Naive thymus-derived CD4-positive, alpha-beta T cell (primary cell): ENCODE measurements at regions of chr14 and their contacts with region 1.

Region 1: DNA sequence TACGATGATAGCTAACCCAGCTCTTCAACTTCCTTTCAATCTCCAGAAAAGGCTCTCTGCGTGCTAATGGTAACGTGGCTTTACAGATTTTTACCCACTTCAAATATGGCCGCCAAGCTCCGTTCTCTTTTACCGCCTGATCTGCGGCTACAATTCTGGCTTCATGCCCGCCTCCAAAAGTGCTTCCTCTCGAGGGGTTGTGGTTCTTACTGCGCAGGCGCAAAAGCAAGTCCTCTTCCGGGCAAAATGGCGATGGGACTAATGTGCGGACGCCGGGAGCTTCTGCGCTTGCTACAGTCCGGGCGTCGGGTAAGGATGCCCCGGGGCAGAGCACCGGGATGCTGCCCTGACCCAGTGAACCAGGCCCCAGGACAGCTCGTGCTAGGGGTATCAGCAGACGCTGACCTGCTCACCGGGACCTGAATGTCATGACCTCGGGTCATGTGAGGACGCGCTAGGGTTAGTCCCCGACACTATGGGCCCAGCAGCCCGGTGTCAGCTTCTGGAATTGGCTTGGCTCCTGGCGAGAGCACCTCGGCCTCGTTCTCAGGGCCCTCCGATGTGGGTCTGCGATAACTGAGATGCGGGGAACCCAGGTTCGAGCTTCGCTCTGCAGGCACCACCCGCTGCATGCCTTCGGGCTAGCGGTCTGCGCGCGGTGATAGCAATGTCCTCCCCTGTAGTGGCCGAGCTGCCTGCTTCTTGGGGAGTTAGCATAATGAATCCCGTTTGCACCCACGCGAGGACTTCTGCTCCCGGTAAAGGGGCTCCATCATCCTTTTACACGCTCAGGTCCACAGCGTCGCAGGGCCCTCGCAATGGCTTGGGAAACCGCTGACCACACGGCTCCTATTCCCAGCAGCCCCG is at the start of gene OXA1L:
- DNase-seq: peak; percentile 86 to 99 (median 96)
- ATAC-seq: peak; percentile 96
- H3K4me3 ChIP-seq: peak within 1 kb of the TSS; percentile 93
- H3K4me3 Mint-ChIP-seq: peak within 1 kb of the TSS; percentile 86 to 97 (median 90)
- H3K27ac ChIP-seq: peak within 1 kb of the TSS; percentile 86
- H3K27ac Mint-ChIP-seq: peak within 1 kb of the TSS; percentile 88 to 99 (median 97)
- H3K4me1 ChIP-seq: peaks cover 18 to 24% of the 10 kb centered on the region in 2 donors
- H3K4me1 Mint-ChIP-seq: peaks cover 21 to 43% (median 39%) of the 10 kb centered on the region in 7 donors
- H3K27me3 ChIP-seq: no peaks in the 10 kb centered on the region
- H3K27me3 Mint-ChIP-seq: no peaks in the 10 kb centered on the region
- total RNA-seq, gene OXA1L: 112 to 177 (median 144) TPM

Region 2: DNA sequence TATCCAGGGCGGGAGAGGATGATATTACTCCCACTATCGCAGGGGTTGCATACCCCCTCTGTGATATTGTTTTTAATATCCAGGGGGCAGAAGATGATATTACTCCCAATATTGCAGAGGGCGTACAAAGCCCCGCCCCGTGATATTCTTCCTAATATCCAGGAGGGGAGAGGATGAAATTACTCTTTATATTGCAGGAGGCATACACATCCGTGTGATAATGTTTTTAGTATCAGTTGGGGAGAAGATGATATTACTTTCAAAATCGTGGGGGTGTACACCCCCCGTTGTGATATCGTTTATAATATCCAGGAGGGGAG is 53.1 kb before region 1 on chr14:
- CTCF ChIA-PET with region 1: no interaction called
- POLR2A ChIA-PET with region 1: interaction called, 6 read pairs
- intact Hi-C with region 1: loop called (anchors 1 to 2 kb)
- DNase-seq: no peak
- ATAC-seq: no peak
- H3K4me3 ChIP-seq: peak overlapping the region; percentile 34
- H3K4me3 Mint-ChIP-seq: peak overlapping the region; percentile 79 to 92 (median 88)
- H3K27ac ChIP-seq: no peak overlapping the region
- H3K27ac Mint-ChIP-seq: peak overlapping the region in 4 of 9 donors; percentile 32 to 76 (median 64)
- H3K4me1 ChIP-seq: peaks cover 4 to 6% of the 10 kb centered on the region in 2 donors
- H3K4me1 Mint-ChIP-seq: peaks cover 3 to 17% (median 11%) of the 10 kb centered on the region in 7 donors
- H3K27me3 ChIP-seq: no peaks in the 10 kb centered on the region
- H3K27me3 Mint-ChIP-seq: peaks cover 27 to 44% (median 34%) of the 10 kb centered on the region in 5 donors

Region 3: DNA sequence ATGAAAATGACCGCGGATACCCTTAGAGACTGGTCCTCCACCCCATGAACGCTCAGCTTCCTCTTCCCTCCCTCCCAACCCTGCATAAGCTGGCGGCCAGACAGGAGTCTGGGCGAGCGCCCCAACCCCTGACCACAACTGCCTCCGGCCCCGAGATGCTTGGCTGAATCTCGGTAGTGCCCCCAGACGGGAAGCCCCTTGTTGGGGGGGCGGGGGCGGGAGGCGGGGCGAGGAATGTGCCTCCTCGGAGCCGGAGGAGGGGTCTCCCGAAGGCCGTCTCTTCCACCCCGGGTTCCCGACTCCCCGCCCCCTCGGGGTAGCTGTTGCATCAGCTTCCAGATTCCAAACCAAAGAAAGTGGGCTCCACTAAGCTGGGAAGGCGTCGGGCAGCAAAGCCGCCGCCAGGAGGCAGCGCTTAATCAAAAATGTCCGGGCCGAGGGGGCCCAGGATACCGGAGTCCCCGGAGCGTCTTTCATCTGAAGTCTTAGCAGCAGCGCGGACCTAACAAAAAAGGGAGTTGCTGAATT is 55.9 kb after region 1 on chr14:
- CTCF ChIA-PET with region 1: interaction called, 3 read pairs
- POLR2A ChIA-PET with region 1: interaction called, 5 read pairs
- intact Hi-C with region 1: loop called in 1 of 2 experiments (anchors 2 kb)
- DNase-seq: peak; percentile 50 to 71 (median 65)
- ATAC-seq: peak; percentile 83
- H3K4me3 ChIP-seq: peak overlapping the region; percentile 38
- H3K4me3 Mint-ChIP-seq: peak overlapping the region; percentile 47 to 78 (median 66)
- H3K27ac ChIP-seq: no peak overlapping the region
- H3K27ac Mint-ChIP-seq: peak overlapping the region in 3 of 9 donors; percentile 11 to 36 (median 22)
- H3K4me1 ChIP-seq: peaks cover 0 to 17% of the 10 kb centered on the region in 2 donors
- H3K4me1 Mint-ChIP-seq: peaks cover 6 to 37% (median 24%) of the 10 kb centered on the region in 7 donors
- H3K27me3 ChIP-seq: no peaks in the 10 kb centered on the region
- H3K27me3 Mint-ChIP-seq: peaks cover 0 to 16% (median 4%) of the 10 kb centered on the region in 5 donors

Region 4: DNA sequence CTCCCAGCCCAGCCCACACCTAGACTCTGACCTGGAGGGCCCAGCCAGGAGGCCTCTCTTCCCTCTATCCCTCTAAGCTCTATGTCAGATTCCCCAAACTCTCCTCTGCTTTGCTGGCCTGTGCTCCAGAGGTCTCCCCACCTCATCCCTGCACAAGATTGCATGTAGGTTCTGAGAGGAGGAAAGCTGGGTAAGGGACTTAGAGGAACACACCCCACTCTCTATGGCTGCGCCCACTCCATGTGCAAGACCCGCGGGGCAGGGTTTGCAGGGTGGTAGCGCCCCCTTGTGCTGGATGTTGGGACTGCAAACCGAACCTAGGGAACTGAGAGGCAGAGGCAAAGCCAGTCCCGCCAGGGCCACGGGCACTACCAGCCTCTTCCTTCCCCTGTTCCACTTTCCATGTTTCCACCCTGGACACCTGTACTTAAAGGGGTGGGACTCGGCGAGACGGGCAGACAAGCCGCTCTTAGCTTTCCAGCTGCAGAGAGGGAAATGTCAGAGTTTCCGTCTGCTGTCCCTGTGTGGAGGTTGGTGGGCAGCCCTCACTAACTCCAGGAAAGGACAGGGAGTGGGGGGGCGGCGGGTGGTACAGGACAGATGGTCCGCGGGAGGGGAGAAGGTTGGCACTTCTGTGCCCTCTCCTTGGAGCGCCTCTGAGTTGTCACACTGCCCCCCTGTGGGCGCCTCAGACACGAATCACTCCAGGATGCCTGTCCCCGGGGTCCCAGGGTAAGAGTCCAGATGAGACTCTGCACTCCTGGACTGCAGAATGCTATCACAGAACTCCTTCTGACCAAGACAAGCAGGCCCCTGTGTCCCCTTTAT is 86.5 kb after region 1 on chr14:
- CTCF ChIA-PET with region 1: no interaction called
- POLR2A ChIA-PET with region 1: interaction called, 3 read pairs
- intact Hi-C with region 1: loop called in 1 of 2 experiments (anchors 1 kb)
- DNase-seq: peak; percentile 75 to 94 (median 87)
- ATAC-seq: peak; percentile 96
- H3K4me3 ChIP-seq: peak overlapping the region; percentile 74
- H3K4me3 Mint-ChIP-seq: peak overlapping the region; percentile 81 to 89 (median 86)
- H3K27ac ChIP-seq: peak overlapping the region; percentile 72
- H3K27ac Mint-ChIP-seq: peak overlapping the region in 7 of 9 donors; percentile 71 to 85 (median 81)
- H3K4me1 ChIP-seq: peaks cover 3% of the 10 kb centered on the region in 2 donors
- H3K4me1 Mint-ChIP-seq: peaks cover 8 to 30% (median 21%) of the 10 kb centered on the region in 7 donors
- H3K27me3 ChIP-seq: no peaks in the 10 kb centered on the region
- H3K27me3 Mint-ChIP-seq: peaks cover 0 to 19% (median 6%) of the 10 kb centered on the region in 5 donors

Region 5: DNA sequence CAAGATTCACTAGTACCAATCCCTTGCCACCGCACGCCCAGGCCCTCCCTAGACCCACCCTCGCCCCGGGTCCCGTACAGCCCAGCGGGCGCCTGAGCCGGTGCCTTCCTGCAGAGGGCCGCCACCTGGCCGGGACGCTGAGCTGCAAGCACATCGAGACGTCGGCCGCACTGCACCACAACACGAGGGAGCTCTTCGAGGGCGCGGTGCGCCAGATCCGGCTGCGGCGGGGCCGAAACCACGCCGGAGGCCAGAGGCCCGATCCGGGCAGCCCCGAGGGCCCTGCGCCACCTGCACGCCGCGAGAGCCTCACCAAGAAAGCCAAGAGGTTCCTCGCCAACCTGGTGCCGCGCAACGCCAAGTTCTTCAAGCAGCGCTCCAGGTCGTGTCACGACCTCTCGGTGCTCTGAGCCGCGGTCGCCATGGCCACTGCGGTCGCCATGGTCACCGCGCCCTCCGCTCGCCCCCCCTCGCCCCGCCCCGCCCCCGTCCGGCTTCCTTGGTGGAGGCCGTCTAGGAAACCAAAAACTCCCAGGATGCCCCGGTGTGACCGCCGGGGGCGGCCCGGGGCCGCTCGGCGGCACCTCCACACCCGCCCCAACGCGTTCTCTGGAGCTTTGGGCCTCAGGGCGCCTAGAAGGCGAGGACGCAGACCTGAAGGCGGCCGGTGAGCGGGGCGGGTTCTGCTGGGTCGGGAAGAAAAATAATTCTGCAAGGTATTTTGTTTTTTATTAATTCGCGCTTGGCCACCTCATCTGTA is 120.0 kb after region 1 on chr14:
- CTCF ChIA-PET with region 1: no interaction called
- POLR2A ChIA-PET with region 1: interaction called, 3 read pairs
- intact Hi-C with region 1: loop called in 1 of 2 experiments (anchors 1 kb)
- DNase-seq: peak; percentile 42 to 75 (median 69)
- ATAC-seq: peak; percentile 80
- H3K4me3 ChIP-seq: peak overlapping the region; percentile 77
- H3K4me3 Mint-ChIP-seq: peak overlapping the region; percentile 88 to 100 (median 92)
- H3K27ac ChIP-seq: peak overlapping the region; percentile 75
- H3K27ac Mint-ChIP-seq: peak overlapping the region; percentile 85 to 98 (median 96)
- H3K4me1 ChIP-seq: peaks cover 21 to 53% of the 10 kb centered on the region in 2 donors
- H3K4me1 Mint-ChIP-seq: peaks cover 39 to 80% (median 72%) of the 10 kb centered on the region in 7 donors
- H3K27me3 ChIP-seq: no peaks in the 10 kb centered on the region
- H3K27me3 Mint-ChIP-seq: peaks cover 0 to 21% (median 0%) of the 10 kb centered on the region in 5 donors

Region 6: DNA sequence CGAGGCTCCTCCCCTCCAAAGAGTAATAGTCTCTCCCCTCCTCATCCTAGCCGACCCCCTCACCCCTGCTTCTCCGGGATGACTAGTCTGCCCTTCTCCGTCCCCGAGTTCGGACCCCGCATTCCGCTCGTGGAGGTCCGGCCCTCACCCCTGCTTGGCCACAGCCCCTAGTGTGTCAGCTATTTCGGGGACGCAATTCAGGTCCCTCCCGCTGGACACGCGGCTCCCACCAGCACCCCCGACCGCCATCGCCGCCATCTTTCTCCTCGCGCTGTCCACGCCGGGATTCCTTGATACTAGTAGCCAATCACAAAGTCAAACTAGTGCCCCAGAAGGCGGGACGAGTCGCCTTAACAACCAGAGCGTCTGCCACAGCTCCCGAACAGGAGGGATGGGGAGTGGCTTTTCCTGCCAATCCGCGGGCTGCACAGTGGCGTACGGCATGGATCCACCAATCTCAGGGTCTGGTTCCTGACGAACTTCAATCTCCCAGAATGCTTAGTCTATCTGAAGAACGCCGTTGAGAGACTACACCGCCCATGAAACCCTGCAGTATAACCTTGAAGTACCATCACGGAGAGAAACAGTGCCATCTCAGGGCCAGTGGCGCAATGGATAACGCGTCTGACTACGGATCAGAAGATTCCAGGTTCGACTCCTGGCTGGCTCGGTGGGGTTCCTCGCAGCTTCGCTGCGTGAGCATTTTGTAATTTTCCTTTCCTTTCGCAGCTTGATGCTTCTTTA is 162.6 kb after region 1 on chr14 and contains the start of gene PRMT5:
- CTCF ChIA-PET with region 1: no interaction called
- POLR2A ChIA-PET with region 1: interaction called, 4 read pairs
- intact Hi-C with region 1: loop called in 1 of 2 experiments (anchors 1 kb)
- DNase-seq: peak; percentile 81 to 100 (median 99)
- ATAC-seq: peak; percentile 97
- H3K4me3 ChIP-seq: peak within 1 kb of the TSS; percentile 91
- H3K4me3 Mint-ChIP-seq: no peak within 1 kb of the TSS
- H3K27ac ChIP-seq: peak within 1 kb of the TSS; percentile 91
- H3K27ac Mint-ChIP-seq: no peak within 1 kb of the TSS
- H3K4me1 ChIP-seq: peaks cover 9 to 17% of the 10 kb centered on the region in 2 donors
- H3K4me1 Mint-ChIP-seq: peaks cover 5 to 36% (median 20%) of the 10 kb centered on the region in 7 donors
- H3K27me3 ChIP-seq: no peaks in the 10 kb centered on the region
- H3K27me3 Mint-ChIP-seq: no peaks in the 10 kb centered on the region
- total RNA-seq, gene PRMT5: 24.9 to 82.8 (median 34.2) TPM

Region 7: DNA sequence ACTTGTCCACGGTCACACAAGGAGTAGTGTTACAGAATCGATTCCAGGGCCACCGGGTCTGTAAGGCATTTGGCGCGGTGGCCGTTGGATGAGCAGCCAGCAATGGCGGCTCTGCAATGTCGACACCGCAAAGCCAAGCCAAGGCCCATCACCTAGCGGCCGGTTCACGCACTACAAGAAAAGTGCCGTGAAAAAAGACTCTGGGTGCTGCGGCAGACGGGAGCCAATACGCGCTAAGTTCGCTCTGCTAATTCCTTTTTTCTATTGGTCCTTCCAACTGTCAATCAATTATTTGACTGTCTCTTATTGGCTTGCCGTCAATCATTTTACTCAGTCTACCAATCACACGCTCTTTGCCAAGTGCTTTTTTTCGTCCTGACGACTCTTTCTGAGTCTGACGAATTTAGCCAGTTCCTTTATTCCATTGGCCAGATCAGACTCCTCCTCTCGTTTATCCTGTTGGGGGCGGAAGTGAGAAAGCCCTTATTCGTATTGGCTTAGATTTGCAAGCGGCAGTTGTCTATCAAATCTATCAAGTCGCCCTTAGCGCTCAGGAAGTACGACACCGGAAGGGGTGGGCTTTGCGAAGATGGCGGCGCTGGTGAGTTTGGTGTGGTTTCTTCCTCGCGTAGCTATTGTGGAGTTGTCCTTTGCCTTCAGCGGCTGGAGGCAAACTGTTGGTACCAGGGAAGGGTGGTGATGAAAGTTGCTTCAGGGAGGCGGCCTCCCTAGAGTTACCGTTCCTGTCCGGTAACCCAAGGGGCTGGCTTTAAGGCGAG is 702.6 kb after region 1 on chr14 and contains the start of gene NGDN:
- CTCF ChIA-PET with region 1: no interaction called
- POLR2A ChIA-PET with region 1: no interaction called
- intact Hi-C with region 1: loop called in 1 of 2 experiments (anchors 1 kb)
- DNase-seq: peak; percentile 76 to 99 (median 96)
- ATAC-seq: peak; percentile 94
- H3K4me3 ChIP-seq: peak within 1 kb of the TSS; percentile 73
- H3K4me3 Mint-ChIP-seq: peak within 1 kb of the TSS in 1 of 10 donors; percentile 77
- H3K27ac ChIP-seq: peak within 1 kb of the TSS; percentile 94
- H3K27ac Mint-ChIP-seq: peak within 1 kb of the TSS in 2 of 9 donors; percentile 26 to 68
- H3K4me1 ChIP-seq: peaks cover 6 to 11% of the 10 kb centered on the region in 2 donors
- H3K4me1 Mint-ChIP-seq: peaks cover 7 to 10% (median 7%) of the 10 kb centered on the region in 7 donors
- H3K27me3 ChIP-seq: no peaks in the 10 kb centered on the region
- H3K27me3 Mint-ChIP-seq: no peaks in the 10 kb centered on the region
- total RNA-seq, gene NGDN: 52.9 to 152 (median 74.0) TPM